CD8-positive, alpha-beta memory T cell (primary cell): ENCODE measurements at regions of chr6 and their contacts with region 1.

Region 1: GRCh38 chr6:107786709-107787588 is 37.2 kb downstream of the SCML4 start:
- DNase-seq: peak; percentile 16 to 72 (median 58)
- H3K4me3 ChIP-seq: peak overlapping the region; percentile 33
- H3K4me3 Mint-ChIP-seq: peak overlapping the region; percentile 61 to 91 (median 84)
- H3K27ac ChIP-seq: peak overlapping the region; percentile 9
- H3K27ac Mint-ChIP-seq: peak overlapping the region; percentile 88 to 96 (median 92)
- H3K4me1 ChIP-seq: peaks cover 85% of the 10 kb centered on the region
- H3K4me1 Mint-ChIP-seq: peaks cover 80 to 90% (median 88%) of the 10 kb centered on the region in 3 donors
- H3K27me3 ChIP-seq: no peaks in the 10 kb centered on the region
- H3K27me3 Mint-ChIP-seq: peaks cover 0 to 2% of the 10 kb centered on the region in 2 donors

Region 2: DNA sequence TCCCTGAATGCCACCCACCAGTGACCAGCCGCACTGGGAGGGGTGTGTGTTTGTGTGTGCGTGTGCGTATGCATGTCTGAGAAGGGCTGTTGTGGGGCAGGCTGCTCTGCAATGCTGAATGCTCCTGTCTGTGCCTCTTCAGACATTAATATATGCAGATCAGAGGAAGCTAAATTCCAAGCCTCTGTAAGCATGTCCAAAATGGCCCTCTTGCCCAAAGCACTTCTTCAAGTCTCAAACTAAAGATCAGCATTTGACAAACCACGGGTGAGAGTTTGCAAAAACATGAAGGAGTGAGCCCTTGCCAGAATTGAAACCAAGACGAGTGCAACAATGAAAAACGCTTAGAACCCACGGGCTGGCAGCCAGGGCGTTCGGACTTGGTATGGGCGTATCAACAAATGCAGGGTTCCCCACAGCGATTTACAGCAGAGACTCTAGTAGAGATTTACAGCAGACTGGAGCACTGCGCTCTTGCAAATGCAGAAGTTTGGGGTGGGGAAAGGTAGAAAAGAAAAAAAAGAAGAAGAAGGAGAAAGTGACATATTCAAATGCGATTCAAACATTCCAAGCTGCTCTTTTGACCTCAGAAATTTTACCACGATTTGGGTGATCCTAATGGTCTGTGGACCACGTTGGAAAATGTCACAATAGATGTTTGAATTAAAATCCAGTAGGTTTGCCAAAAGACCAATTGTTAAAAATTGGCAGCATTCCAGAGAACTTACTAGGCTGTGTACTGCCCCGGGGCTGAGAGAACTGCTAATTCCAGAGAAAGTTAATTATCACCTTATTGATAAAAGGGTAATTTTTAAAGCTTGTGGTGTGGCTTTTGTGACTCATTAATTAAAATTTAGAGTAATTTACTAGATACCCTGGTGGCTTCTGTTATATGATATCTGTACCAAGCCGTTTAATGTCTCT is 33.7 kb after region 1 on chr6:
- CTCF ChIA-PET with region 1: interaction called, 8 read pairs
- POLR2A ChIA-PET with region 1: interaction called, 27 read pairs
- DNase-seq: peak in 4 of 5 donors; percentile 12 to 62 (median 48)
- H3K4me3 ChIP-seq: peak overlapping the region; percentile 68
- H3K4me3 Mint-ChIP-seq: peak overlapping the region; percentile 93 to 97 (median 97)
- H3K27ac ChIP-seq: peak overlapping the region; percentile 92
- H3K27ac Mint-ChIP-seq: peak overlapping the region; percentile 95 to 100 (median 100)
- H3K4me1 ChIP-seq: peaks cover 71% of the 10 kb centered on the region
- H3K4me1 Mint-ChIP-seq: peaks cover 75 to 89% (median 86%) of the 10 kb centered on the region in 3 donors
- H3K27me3 ChIP-seq: no peaks in the 10 kb centered on the region
- H3K27me3 Mint-ChIP-seq: no peaks in the 10 kb centered on the region